ENCODE measurements at regions of chr13 and their contacts with region 1.

Region 1: DNA sequence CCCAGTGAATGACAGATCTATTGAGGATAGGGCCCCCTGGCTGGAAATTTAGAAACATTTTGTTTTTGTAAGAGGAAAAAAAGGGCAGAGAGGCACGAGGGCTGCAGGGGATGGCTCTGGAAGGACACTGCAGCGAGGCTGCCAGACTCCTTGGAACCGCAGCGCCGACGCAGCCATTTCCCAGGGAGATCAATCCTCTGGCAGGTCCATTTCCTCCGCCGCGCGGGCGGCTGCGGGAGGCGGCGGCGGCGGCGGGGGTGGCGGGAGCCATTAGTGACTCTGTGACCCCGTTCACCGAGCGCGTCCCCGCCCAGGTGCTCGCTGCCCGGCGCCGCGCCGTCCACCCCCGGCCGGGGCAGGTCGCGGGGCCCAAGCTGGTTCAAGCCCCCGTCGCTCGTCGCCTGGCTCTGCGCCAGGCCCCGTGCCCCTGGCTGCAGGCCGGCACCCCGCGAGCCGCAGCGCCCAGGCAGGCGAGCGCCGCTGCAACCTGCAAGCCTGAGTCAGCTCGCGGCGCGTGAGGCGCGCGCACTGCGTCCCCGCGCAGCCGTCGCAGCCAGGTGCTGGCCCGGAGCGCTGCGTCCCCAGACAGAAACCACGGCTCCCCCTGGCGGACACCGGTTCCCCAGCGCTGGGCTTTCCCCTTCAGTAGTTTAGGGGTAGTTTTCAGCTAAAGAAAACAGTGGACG is 192.6 kb downstream of the KATNAL1 start:
- DNase-seq: peak; percentile 92 to 97
- ATAC-seq: peak; percentile 90
- H3K4me3 ChIP-seq: peak overlapping the region; percentile 37 to 74
- H3K27ac ChIP-seq: no peak overlapping the region
- H3K4me1 ChIP-seq: no peaks in the 10 kb centered on the region
- H3K27me3 ChIP-seq: no peaks in the 10 kb centered on the region

Region 2: DNA sequence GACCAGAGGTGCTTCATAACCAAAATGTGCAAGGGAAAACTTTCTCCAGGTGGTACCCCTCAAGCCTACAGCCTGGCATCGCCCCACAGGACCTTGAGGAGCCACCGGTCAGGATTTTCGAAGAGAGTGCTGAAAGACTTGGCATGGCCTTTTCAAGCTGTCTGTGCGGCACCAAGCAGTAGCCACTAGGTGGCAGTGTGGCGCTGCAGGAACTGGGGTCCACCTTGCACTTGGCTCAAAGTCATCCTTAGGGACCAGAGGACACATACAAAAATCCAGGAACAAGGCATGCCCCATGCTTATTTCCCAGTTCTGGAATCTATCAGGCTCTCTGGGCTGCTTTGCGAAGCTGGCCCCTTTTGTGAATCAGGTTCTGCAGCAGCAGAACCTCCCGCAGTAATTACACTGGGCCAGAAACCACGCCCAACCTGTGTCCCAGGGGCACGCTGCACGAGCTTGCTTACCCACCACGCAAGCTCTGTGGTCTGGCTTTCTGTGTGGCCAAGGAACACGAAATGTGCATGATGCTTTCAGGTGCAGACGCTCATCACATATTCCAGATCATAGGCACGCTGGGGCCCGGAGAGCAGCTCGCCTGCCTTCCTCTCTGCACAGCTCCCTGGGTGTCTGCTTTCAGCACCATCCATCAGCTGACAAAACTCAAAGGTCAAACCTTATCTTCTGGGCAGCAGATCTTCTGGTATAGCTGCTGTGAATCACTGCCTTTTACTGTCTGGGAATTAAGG is 606.4 kb before region 1 on chr13:
- intact Hi-C with region 1: loop called (anchors 2 to 5 kb)
- DNase-seq: peak; percentile 87 to 94
- ATAC-seq: peak; percentile 87
- H3K4me3 ChIP-seq: no peak overlapping the region
- H3K27ac ChIP-seq: no peak overlapping the region
- H3K4me1 ChIP-seq: no peaks in the 10 kb centered on the region
- H3K27me3 ChIP-seq: no peaks in the 10 kb centered on the region

Region 3: DNA sequence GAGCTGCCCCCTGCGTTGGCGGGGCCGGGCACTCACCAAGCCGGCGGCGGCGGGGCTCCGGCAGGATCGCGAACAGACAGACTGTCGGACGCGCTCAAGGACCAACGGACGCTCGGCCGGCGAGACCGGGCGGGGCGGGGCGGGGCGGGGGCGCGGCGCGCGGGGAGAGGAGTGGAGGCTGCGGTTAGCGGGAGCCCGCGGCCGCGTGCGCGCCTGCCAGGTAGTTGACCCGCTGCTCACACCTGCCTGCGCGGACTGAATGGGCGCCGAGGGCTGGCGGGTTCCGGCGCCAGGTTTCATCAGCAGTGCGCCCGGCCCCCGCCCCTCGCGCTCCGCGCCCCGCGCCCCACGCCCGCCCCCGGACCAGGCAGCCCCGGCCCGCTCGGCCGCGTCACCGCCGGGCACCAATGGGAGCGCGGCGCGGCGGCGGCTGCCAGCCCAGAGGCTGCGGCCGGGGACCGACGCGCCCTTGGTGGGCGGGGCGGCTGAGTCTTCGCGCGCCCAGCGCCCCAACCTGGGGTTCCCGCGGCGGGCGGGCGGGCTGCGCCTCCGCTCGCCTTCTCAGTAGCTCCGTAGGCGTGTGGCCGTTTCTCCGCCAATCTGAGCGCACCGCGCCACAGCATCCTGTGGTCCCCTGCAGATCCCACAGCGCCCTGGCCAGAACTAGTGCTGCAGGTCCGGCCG is 519.2 kb before region 1 on chr13 and contains the start of gene SLC7A1:
- intact Hi-C with region 1: loop called in 1 of 2 experiments (anchors 10 kb)
- DNase-seq: peak; percentile 84 to 94
- ATAC-seq: peak; percentile 92
- H3K4me3 ChIP-seq: peak within 1 kb of the TSS; percentile 93 to 96
- H3K27ac ChIP-seq: peak within 1 kb of the TSS; percentile 81 to 87
- H3K4me1 ChIP-seq: no peaks in the 10 kb centered on the region
- H3K27me3 ChIP-seq: no peaks in the 10 kb centered on the region
- total RNA-seq, gene SLC7A1: 29.3 to 52.1 TPM

Region 4: DNA sequence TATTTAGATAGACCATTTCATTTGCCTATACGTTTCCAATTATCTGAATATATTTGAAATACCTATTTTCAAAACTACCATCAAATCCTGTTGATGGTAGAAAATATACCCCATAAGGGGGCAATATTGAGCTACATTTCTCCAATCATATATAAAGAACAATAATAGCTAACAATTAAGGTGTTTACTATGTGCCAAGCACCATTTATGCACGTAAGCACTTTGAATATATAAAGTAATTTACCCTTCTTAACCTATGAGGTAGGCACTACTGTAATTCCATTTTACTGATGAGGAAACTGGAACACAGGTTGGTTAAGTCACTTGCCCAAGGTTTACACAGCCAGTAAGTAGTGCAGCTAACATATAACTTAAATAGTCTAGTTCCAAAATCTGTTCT is 343.5 kb before region 1 on chr13:
- intact Hi-C with region 1: loop called (anchors 2 to 5 kb)
- DNase-seq: no peak
- ATAC-seq: no peak
- H3K4me3 ChIP-seq: no peak overlapping the region
- H3K27ac ChIP-seq: no peak overlapping the region
- H3K4me1 ChIP-seq: no peaks in the 10 kb centered on the region
- H3K27me3 ChIP-seq: no peaks in the 10 kb centered on the region

Region 5: GRCh38 chr13:29850224-29850898 is 264.4 kb before region 1 on chr13 and contains the start of gene UBL3:
- intact Hi-C with region 1: loop called (anchors 2 kb)
- DNase-seq: peak; percentile 98
- ATAC-seq: peak; percentile 96
- H3K4me3 ChIP-seq: peak within 1 kb of the TSS; percentile 71 to 85
- H3K27ac ChIP-seq: peak within 1 kb of the TSS; percentile 86 to 96
- H3K4me1 ChIP-seq: no peaks in the 10 kb centered on the region
- H3K27me3 ChIP-seq: no peaks in the 10 kb centered on the region
- total RNA-seq, gene UBL3: 24.2 to 29.4 TPM

Region 6: DNA sequence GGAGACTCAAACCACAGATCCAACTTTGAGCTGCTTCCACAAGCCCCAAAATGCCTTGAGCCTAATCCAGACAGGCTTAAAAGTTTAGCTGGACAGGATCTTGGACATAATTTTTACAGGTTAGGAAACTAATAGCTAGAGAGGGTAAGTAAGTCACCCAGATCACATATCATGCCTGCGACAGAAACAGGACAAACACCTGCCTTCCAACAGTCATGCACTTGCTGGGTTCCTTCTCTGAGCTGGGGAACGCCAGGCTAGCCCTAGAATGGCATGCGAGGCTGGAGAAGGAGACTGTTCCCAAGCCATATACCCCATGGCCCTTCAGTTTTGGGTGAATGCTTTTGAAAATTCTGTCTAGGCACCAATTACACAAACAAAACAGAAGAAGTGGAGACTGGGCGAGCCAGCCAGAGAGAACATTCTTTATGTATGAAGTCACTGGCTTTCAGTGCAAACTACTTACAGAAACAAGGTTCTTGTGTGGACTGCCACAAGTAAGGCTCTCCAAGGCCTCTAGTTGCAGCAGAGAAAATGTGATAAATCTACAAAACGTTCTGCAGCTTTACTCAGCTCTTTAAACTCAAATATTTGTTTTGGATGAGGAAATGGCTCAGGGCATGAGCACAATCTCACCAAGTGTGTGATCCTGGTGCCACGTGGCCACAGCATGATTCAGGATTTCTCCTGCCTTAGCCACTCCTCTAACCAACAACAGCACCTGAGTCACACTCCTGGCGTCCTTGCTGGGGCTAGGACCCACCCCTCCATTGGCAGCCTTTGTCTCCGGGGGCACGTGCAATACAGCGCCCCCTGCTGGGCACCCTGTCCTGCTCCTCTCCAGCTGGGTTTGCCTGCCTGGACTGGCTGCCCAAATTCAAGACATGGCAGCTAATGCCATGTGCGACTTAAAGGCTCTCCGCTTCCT is 190.9 kb before region 1 on chr13:
- intact Hi-C with region 1: loop called (anchors 2 to 10 kb)
- DNase-seq: peak; percentile 93 to 94
- ATAC-seq: peak; percentile 93
- H3K4me3 ChIP-seq: no peak overlapping the region
- H3K27ac ChIP-seq: peak overlapping the region; percentile 92 to 100
- H3K4me1 ChIP-seq: peaks cover 0 to 9% of the 10 kb centered on the region in 2 donors
- H3K27me3 ChIP-seq: no peaks in the 10 kb centered on the region